Activated naive CD4-positive, alpha-beta T cell treated with anti-CD3 and anti-CD28 coated beads for 36 hours (primary cell): ENCODE measurements at regions of chr22 and their contacts with region 1.

Region 1: DNA sequence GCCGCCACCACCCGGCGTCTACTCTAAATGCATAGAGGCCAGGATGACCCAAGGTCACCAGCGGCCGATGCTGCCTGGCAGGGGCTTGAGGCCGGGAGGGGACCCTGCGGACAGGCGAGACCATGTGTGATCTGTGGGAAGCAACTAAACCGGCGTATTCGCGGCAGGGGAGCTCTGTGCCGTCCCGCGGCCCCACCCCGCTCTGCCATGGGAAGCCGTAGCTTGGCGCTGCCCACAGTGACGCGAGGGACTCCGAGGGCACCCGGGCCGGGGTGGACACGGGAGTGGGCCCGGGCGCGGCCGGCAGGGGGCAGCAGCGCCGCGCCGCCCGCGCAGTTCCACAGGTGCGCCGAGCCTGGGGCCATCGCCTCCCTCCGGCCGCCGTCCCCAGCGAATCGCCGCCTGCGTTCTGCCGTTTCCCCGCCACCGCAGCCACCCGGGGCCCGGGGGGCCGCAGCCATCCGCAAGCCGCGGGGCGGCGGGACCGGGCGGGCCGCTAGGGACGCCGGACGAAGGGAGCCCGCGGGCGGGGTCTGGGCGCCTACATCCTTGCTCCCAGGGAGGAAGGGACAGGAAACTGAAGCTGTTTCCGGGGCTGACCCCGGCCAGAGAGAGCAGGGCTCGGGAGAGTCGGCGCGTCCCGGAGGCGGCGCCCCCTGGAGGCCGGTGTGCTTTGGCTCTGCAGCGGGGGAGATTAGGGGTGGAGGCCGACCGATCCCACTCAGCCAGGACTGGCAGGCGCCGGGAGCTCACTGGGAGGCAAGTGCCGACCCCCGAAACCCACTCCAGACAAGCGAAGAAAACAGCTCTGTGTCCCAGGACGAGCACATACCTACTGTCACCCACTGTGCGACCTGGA is 12.5 kb upstream of the HDHD5 start:
- DNase-seq: peak; percentile 83
- H3K4me3 Mint-ChIP-seq: peak overlapping the region; percentile 78
- H3K27ac Mint-ChIP-seq: peak overlapping the region; percentile 44
- H3K4me1 Mint-ChIP-seq: peaks cover 5% of the 10 kb centered on the region
- H3K27me3 Mint-ChIP-seq: no peaks in the 10 kb centered on the region

Region 2: DNA sequence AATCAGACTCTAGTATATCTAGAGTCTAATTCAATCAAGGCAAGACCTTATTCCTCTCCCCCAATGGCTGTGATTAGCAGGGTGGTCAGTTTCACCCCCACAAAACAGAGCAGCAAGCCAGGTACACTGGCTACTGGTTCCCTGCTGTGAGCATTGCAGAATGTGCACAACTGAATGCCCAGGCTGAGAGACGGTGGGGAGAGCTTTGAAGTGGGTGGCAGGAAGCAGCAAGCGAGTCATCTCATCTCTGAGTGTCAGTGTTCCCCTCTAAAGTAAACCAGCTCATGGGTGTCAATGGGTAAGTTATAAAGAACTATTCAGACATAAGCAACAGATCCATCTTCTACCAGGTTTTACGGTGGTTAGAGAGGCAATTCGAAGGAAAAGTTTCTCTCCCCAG is 201.1 kb before region 1 on chr22:
- CTCF ChIA-PET with region 1: no interaction called
- intact Hi-C with region 1: no loop called
- DNase-seq: peak; percentile 43
- H3K4me3 Mint-ChIP-seq: no peak overlapping the region
- H3K27ac Mint-ChIP-seq: no peak overlapping the region
- H3K4me1 Mint-ChIP-seq: peaks cover 9% of the 10 kb centered on the region
- H3K27me3 Mint-ChIP-seq: peaks cover 22% of the 10 kb centered on the region

Region 3: DNA sequence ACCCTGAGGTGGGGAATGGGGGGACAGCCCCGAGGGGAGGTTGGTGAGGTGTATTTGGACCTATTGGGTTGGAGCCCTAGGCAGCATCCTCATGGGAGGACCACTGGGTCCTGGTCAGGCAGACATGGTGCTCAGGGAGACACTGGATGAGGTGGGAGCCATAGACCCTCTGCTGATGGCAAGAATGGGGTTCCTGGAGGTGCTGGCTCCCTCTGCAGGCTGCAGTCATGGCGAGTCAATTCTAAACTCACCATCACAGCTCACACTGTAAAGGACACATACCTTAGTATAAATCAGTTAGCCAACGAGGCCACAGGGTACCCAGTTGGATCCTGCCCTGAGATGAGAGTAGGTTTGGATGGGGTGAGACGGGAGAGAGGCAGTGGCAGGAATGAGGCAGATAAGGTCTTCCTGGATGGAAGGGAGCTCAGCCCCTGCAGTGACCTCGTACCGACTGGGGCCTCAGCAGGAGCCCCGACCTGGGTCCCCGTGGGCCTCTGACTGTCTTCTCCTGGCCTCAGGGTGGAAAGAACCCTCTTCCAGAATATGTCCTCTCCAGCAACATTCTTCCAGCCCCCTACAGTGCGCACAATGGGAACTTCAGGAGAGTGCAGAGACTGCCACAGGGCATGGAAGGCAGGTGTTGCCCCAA is 161.8 kb before region 1 on chr22:
- CTCF ChIA-PET with region 1: no interaction called
- intact Hi-C with region 1: no loop called
- DNase-seq: no peak
- H3K4me3 Mint-ChIP-seq: no peak overlapping the region
- H3K27ac Mint-ChIP-seq: no peak overlapping the region
- H3K4me1 Mint-ChIP-seq: no peaks in the 10 kb centered on the region
- H3K27me3 Mint-ChIP-seq: peaks cover 44% of the 10 kb centered on the region

Region 4: GRCh38 chr22:17077255-17077654 is 94.3 kb before region 1 on chr22:
- CTCF ChIA-PET with region 1: interaction called, 85 read pairs
- intact Hi-C with region 1: loop called (anchors 1 kb)
- DNase-seq: no peak
- H3K4me3 Mint-ChIP-seq: no peak overlapping the region
- H3K27ac Mint-ChIP-seq: no peak overlapping the region
- H3K4me1 Mint-ChIP-seq: peaks cover 20% of the 10 kb centered on the region
- H3K27me3 Mint-ChIP-seq: no peaks in the 10 kb centered on the region

Region 5: GRCh38 chr22:17158568-17159503 is 12.7 kb before region 1 on chr22 and contains the start of gene HDHD5:
- CTCF ChIA-PET with region 1: interaction called, 46 read pairs
- intact Hi-C with region 1: loop called (anchors 1 kb)
- DNase-seq: peak; percentile 90
- H3K4me3 Mint-ChIP-seq: peak within 1 kb of the TSS; percentile 84
- H3K27ac Mint-ChIP-seq: peak within 1 kb of the TSS; percentile 78
- H3K4me1 Mint-ChIP-seq: peaks cover 38% of the 10 kb centered on the region
- H3K27me3 Mint-ChIP-seq: no peaks in the 10 kb centered on the region
- total RNA-seq, gene HDHD5: 40.1 to 43.7 TPM

Region 6: GRCh38 chr22:17213976-17214375 is 42.4 kb after region 1 on chr22:
- CTCF ChIA-PET with region 1: interaction called, 15 read pairs
- intact Hi-C with region 1: loop called (anchors 5 kb)
- DNase-seq: peak; percentile 73
- H3K4me3 Mint-ChIP-seq: no peak overlapping the region
- H3K27ac Mint-ChIP-seq: no peak overlapping the region
- H3K4me1 Mint-ChIP-seq: peaks cover 48% of the 10 kb centered on the region
- H3K27me3 Mint-ChIP-seq: no peaks in the 10 kb centered on the region

Region 7: DNA sequence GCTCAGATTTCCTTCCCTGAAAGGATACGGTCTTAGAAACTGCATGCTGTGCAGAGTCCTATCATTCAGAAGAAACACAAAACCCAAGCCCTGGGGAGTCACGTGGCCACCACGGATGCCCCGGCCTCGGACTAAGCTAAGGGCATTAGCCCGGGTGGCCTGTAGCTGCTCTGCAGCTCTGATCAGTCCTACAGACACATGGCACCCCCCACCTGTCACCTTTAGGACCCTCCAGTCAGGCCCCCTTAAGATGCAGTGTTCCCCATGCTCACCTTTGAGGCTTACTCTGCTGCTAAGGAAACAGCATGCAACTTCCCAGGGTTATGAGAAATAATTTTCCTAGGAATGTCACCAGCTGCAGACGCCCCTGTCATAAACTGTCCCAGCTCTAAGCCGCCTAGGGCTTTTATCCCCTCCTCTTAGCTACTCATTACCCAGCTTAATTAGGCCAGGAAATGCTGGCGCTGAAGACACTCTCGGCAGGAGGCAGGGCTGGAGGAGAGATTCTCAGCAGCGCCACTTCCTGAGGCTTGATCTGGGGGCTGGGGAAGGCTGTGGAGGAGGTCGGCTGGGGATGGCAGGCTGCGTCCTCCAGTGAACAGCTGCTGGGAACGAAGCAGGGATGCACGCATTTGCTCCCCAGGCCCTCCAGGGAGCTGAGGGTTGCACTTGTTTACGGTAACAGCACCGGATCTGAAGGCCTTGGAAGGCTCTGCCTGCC is 94.9 kb after region 1 on chr22:
- CTCF ChIA-PET with region 1: interaction called, 12 read pairs
- intact Hi-C with region 1: no loop called
- DNase-seq: peak; percentile 54
- H3K4me3 Mint-ChIP-seq: no peak overlapping the region
- H3K27ac Mint-ChIP-seq: no peak overlapping the region
- H3K4me1 Mint-ChIP-seq: peaks cover 20% of the 10 kb centered on the region
- H3K27me3 Mint-ChIP-seq: no peaks in the 10 kb centered on the region

Region 8: DNA sequence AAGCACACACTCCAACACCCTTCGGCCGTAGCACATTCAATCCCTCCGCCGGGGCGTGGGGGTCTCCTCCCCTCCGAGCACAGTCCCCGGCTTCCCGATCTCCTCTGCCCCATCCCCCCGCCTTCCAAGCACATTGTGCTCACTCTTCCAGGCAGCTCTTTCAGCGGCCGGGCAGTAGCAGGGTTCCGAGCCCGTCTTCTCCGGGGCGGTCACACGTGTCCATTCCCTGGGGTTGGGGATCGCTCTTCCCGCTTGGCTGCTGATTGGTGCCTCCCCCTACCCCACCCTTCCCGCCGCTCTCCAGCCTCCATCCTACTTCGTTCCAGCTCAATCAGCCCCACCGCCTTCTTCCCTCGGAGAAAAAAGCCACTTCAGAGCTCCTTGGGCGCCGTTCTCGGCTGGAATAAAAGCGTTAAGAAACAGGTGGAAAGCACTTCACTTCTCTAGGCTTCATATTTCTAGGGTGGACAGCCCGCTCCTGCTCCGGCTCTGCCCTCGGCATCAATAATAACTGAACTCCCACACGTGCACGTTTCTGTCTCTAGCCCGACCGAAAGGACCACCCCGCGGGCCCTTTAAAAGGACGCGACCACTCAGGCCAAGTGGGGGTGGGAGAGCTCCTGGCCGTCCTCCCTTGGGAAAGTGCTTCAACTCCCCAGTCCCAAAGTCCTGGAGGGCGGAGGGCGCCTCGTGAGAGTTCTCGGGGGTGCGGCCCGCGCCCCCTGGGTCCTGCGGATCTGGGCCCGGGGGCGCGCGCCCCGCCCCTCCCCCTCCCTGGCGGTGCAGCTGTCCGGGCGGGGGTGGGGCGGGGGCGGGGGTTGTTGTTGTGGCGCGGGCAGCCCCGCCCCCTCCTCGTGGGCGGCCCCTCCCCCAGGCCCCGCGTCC is 197.3 kb after region 1 on chr22:
- CTCF ChIA-PET with region 1: no interaction called
- intact Hi-C with region 1: no loop called
- DNase-seq: peak; percentile 8
- H3K4me3 Mint-ChIP-seq: peak overlapping the region; percentile 66
- H3K27ac Mint-ChIP-seq: no peak overlapping the region
- H3K4me1 Mint-ChIP-seq: peaks cover 22% of the 10 kb centered on the region
- H3K27me3 Mint-ChIP-seq: peaks cover 44% of the 10 kb centered on the region

Region 9: DNA sequence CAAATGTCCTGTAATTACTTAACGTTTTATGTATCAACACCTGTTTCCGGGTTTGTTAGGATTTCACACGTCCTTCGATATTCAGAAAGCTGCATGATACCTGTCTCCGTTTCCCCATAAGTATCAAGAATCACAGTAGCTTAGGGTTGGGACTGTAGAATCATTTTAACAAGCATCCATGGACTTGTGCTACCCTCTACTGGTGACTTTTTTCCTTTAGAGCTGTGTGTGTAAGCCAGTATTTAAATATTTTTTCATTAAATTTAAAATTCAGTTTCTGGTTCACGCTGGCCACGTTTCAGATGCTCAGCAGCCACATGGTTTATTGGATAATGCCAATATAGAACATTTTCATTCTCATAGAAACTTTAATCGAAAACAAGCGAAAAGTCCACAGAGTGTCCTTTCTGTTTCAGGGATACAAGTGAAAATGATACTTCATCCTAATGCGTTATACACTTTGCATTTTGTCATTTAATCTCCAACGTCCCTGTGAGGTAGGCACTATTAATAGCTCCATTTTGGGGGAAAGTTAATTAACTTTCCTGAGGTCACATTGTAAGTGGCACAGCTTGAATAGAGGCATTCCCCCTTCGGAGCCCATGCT is 330.2 kb after region 1 on chr22:
- CTCF ChIA-PET with region 1: interaction called, 71 read pairs
- intact Hi-C with region 1: loop called (anchors 1 kb)
- DNase-seq: peak; percentile 52
- H3K4me3 Mint-ChIP-seq: no peak overlapping the region
- H3K27ac Mint-ChIP-seq: no peak overlapping the region
- H3K4me1 Mint-ChIP-seq: no peaks in the 10 kb centered on the region
- H3K27me3 Mint-ChIP-seq: peaks cover 2% of the 10 kb centered on the region